ENCODE measurements at regions of chr12 and their contacts with region 1.

Region 1: DNA sequence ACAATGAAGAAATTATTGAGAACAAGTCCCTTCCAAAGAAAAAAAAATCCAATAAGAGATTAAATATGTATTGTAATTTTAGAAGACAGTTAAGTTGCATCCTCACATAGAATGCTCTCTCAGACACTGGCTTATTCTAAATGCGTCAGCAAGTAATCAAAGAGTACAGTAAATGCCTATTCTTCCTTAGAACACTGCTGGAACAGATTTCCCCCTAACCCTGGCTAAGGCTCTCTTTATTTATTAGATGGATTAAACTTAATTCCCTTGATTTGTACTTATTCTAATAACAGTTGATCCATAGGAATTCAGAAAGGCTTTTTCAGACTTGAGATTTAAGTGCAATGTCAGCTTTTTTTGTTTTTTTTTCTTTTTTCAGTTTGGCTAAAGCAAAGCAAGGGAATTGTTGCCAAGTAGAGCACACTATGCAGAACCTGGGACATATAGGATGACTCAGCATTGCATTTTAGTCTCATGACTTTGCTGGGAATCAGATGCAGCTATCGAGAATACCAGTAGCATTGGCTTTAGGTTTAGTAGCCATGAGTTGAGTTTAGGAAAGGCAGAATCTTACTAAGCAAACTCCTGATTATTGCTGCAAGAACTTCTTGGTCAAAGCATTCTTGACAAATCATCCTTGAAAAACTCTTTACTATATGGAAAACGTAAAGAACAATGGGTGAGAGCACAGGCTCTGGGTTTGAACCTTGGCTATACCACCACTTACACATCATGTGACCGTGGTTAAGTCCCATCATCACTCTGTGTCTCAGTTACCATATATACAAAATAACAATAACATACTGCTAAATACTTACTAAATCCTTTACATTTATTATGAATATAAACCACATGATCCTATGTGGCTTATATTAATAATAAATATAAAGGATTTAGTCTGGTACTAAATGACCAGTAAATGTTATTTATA is 26.7 kb downstream of the MED21 start:
- DNase-seq: no peak
- ATAC-seq: no peak
- H3K4me3 ChIP-seq: no peak overlapping the region
- H3K27ac ChIP-seq: no peak overlapping the region
- H3K4me1 ChIP-seq: no peaks in the 10 kb centered on the region
- H3K27me3 ChIP-seq: no peaks in the 10 kb centered on the region
- CTCF ChIP-seq: no peak
- POLR2A ChIP-seq: no peak

Region 2: DNA sequence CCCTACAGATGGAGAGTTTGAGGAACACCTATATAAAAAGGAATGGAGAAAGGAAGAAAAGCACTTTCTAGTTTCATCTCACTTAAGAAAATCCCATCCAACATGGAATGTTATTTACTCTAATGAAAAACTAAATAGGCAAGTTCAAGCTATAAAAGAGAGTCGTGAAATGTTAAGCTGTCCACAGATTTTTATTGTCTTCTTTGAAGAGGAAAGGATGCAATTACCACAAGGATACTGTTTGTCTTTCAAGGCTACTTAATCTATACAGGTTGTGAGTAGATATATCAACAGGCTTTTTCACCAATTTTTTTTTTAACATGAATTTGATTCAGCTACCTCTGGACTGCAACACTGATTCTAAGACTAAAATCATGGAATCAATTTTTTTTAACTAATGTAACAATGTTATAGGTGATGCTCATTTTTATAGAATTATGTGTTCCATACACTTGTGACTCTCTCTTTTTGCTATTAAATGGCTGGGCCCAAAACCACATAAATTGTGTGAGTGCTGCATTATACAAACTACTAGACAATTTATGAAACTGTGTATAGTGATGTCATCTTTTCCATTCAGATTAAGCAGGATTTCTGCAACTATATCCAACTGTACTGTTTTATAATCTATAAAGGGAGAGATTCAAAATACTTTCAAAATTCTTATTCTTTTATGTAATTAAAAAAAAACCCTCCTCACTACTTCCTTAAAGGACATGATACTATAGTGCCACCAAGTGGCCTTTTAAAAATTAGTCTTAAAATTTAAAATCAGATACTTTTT is 256.8 kb after region 1 on chr12:
- in situ Hi-C with region 1: loop called in 1 of 4 experiments (anchors 25 kb)
- intact Hi-C with region 1: no loop called
- DNase-seq: no peak
- ATAC-seq: no peak
- H3K4me3 ChIP-seq: no peak overlapping the region
- H3K27ac ChIP-seq: peak overlapping the region in 1 of 4 donors; percentile 18
- H3K4me1 ChIP-seq: no peaks in the 10 kb centered on the region
- H3K27me3 ChIP-seq: no peaks in the 10 kb centered on the region
- CTCF ChIP-seq: peak in 3 of 5 experiments; percentile 39 to 72 (median 64)
- POLR2A ChIP-seq: no peak

Measured in gastrocnemius medialis (tissue), 4 donors.